ENCODE measurements at regions of chr11 and their contacts with region 1.

Region 1: GRCh38 chr11:59753650-59754493 is 1.3 kb upstream of the STX3 start:
- DNase-seq: peak; percentile 89
- H3K4me3 ChIP-seq: peak overlapping the region; percentile 90 to 91
- H3K27ac ChIP-seq: peak overlapping the region; percentile 68 to 86; a peak in 3 of 4 replicates
- H3K4me1 ChIP-seq: peaks cover 0 to 16% of the 10 kb centered on the region in 2 experiments; a peak in 2 of 4 replicates
- H3K27me3 ChIP-seq: no peaks in the 10 kb centered on the region
- CTCF ChIP-seq: peak; percentile 87
- EP300 ChIP-seq: no peak
- RAD21 ChIP-seq: peak; percentile 79

Region 2: DNA sequence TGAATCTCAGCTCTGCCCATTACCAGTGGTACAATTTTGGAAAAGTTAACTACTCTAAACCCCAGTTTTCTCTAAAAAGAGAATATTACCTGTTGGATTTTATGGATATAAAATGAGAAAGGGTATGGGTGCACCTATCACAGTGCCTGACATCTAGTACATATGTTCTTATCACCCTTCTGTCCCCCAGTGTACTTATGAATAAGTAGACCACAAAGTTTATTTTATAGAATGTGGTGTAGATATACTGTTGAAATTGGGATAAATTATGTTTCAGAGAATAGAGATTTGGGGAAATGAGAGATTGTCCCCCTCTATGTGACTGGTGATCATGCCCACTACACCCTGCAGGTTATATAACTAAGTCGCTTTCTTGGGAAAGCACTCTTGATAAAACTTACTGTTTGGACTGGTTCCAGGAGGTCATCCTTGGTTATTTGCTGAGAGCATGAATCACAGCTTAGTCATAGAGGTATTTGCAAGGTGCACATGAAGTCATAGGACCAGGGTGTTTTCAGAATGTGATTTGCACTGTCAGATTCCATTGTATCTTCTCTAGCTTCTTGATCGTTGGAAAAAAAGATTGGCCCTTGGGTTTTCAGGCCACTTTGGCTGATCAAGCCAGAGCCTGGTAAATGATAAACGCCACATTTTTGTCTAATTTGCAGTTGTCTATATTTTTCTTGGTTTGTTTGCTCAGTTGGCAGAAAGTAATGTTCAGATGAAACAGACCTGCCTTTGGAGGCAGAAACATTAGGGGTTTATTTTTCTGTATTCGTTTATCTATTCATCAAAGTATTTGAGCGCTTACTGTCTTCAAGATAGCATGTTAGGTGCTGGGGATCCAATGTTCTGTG is 22.6 kb after region 1 on chr11:
- CTCF ChIA-PET with region 1: interaction called, 16 read pairs
- POLR2A ChIA-PET with region 1: no interaction called
- DNase-seq: no peak
- H3K4me3 ChIP-seq: no peak overlapping the region
- H3K27ac ChIP-seq: peak overlapping the region in 1 of 2 experiments; percentile 54; a peak in 2 of 4 replicates
- H3K4me1 ChIP-seq: peaks cover 0 to 13% of the 10 kb centered on the region in 2 experiments; a peak in 1 of 4 replicates
- H3K27me3 ChIP-seq: no peaks in the 10 kb centered on the region
- CTCF ChIP-seq: no peak
- EP300 ChIP-seq: 0 out of 4 replicates have a peak, but pooled peaks of 1 of the 2 experiments have one; percentile 13
- RAD21 ChIP-seq: no peak

Region 3: DNA sequence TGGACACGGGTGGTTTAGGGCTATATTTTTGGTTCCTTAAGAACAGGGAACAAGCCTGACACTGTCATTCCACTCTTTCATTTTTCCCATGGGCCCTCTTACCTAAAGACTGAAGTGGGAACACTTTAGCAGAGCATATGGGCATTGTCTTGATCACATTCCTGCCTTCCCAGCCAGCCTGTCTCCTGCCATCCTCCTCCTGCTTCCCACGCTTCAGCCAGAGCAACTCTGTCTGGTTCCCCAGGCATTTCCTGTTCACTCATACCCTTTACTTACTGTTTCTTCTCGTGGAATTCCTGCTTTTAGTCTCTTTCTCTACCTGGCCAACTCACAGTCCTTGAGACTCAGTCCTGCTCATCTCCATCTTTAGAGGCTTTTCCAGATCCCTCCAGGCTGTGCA is 33.9 kb after region 1 on chr11:
- CTCF ChIA-PET with region 1: interaction called, 20 read pairs
- POLR2A ChIA-PET with region 1: interaction called, 3 read pairs
- DNase-seq: no peak
- H3K4me3 ChIP-seq: 0 out of 4 replicates have a peak overlapping the region, but pooled peaks of 1 of the 2 experiments have one; percentile 15
- H3K27ac ChIP-seq: peak overlapping the region; percentile 75 to 98; a peak in 3 of 4 replicates
- H3K4me1 ChIP-seq: peaks cover 2 to 28% of the 10 kb centered on the region in 2 experiments; a peak in 3 of 4 replicates
- H3K27me3 ChIP-seq: no peaks in the 10 kb centered on the region
- CTCF ChIP-seq: no peak
- EP300 ChIP-seq: no peak
- RAD21 ChIP-seq: no peak

Region 4: DNA sequence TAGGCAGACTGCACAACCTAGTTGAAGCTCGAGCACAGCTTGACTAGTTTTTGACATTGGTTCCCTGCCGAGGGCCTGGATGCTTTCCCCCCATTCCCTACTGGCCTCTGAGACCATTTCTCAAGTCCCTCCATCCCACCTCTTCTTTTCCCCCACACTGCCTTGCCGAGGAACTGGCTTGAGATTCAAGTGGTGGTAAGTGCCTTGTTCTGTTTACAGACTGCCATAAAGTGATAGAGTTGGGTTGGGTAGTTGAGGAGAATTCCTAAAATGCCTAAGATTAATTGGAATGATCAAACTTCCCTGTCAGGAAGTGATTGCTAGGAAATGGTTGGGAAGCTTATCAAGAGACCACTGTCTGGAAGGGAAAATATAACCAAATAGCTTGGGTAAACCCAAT is 40.5 kb after region 1 on chr11:
- CTCF ChIA-PET with region 1: interaction called, 88 read pairs
- POLR2A ChIA-PET with region 1: interaction called, 3 read pairs
- DNase-seq: no peak
- H3K4me3 ChIP-seq: no peak overlapping the region
- H3K27ac ChIP-seq: no peak overlapping the region
- H3K4me1 ChIP-seq: no peaks in the 10 kb centered on the region
- H3K27me3 ChIP-seq: no peaks in the 10 kb centered on the region
- CTCF ChIP-seq: no peak
- EP300 ChIP-seq: no peak
- RAD21 ChIP-seq: no peak

Region 5: DNA sequence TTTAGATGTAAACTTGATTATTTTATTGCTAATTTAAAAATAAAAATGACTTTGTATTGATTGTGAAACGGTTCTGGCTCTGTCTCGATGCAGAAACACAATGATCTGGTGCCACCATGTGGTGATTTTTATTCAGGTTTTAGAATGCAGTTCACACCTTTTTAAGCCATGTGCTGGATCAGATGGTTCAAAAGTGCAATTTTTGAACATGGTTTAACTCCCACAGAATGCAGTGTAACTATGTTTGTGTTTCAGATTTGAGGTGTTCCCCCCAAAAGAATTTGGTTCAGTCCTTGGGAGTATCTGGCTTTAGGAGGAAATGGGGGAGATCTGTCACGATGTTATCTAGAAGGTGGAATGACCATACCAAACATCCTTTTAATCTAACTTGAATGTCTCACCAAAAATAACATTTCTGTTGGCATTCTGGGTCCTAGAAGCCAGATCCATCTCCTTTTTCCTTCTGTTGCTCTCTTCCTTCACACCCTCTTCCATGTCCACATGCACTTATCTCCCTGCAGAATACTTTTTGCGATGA is 48.8 kb after region 1 on chr11:
- CTCF ChIA-PET with region 1: interaction called, 88 read pairs
- POLR2A ChIA-PET with region 1: interaction called, 4 read pairs
- DNase-seq: peak; percentile 42
- H3K4me3 ChIP-seq: no peak overlapping the region
- H3K27ac ChIP-seq: no peak overlapping the region
- H3K4me1 ChIP-seq: no peaks in the 10 kb centered on the region
- H3K27me3 ChIP-seq: no peaks in the 10 kb centered on the region
- CTCF ChIP-seq: peak; percentile 81
- EP300 ChIP-seq: no peak
- RAD21 ChIP-seq: peak; percentile 85

Region 6: DNA sequence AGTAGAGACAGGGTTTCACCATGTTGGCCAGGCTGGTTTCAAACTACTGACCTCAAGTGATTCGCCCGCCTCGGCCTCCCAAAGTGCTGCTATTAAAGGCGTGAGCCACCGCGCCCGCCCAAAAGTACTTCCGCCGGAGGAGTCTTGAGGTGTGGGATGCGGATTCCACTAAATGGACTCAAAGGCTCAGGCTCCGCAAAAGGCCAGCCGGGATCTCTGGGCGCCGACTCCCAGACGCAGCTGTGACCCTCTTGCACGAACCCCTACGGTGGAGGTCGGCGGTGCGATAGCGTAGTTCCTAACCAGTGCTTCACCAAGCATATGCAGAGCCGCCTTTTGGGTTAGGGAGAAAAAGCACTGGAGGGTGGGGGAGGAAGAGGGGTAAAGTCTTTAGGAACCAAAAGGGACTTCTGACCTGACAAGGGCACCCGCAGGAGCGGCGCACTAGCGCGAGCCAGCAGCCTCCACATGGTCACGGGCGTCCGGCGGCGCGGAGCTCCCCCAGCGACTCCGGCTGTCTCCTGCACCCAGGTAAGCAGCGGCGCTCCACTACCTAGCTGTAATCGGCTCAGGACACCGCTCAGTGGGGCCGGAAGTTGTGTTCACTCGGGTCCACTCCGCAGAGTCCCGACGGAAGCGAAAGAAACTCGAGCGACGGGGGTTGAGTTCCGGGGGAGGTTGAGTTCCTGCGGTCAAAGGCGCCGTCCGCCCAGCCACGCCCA is 56.5 kb after region 1 on chr11 and contains the start of gene MRPL16:
- CTCF ChIA-PET with region 1: interaction called, 88 read pairs
- POLR2A ChIA-PET with region 1: interaction called, 4 read pairs
- DNase-seq: peak; percentile 87
- H3K4me3 ChIP-seq: peak within 1 kb of the TSS; percentile 95
- H3K27ac ChIP-seq: peak within 1 kb of the TSS; percentile 55 to 58; a peak in 3 of 4 replicates
- H3K4me1 ChIP-seq: peaks cover 0 to 5% of the 10 kb centered on the region in 2 experiments; a peak in 2 of 4 replicates
- H3K27me3 ChIP-seq: no peaks in the 10 kb centered on the region
- CTCF ChIP-seq: 0 out of 2 replicates have a peak, but pooled peaks have one; percentile 9
- EP300 ChIP-seq: peak in 1 of 2 experiments; percentile 26; a peak in 1 of 4 replicates
- RAD21 ChIP-seq: no peak
- polyA plus RNA-seq, gene MRPL16: 70.1 and 77.6 TPM in 2 replicates